Panc1 (cell line): ENCODE measurements at regions of chr15 and their contacts with region 1.

Region 1: GRCh38 chr15:96330450-96331145 is at the start of gene NR2F2:
- DNase-seq: no peak
- ATAC-seq: peak; percentile 71
- H3K4me3 ChIP-seq: peak within 1 kb of the TSS; percentile 63 to 97
- H3K27ac ChIP-seq: peak within 1 kb of the TSS; percentile 99
- H3K4me1 ChIP-seq: peaks cover 37% of the 10 kb centered on the region
- H3K27me3 ChIP-seq: no peaks in the 10 kb centered on the region
- CTCF ChIP-seq: no peak
- total RNA-seq, gene NR2F2: 53.7 TPM

Region 2: DNA sequence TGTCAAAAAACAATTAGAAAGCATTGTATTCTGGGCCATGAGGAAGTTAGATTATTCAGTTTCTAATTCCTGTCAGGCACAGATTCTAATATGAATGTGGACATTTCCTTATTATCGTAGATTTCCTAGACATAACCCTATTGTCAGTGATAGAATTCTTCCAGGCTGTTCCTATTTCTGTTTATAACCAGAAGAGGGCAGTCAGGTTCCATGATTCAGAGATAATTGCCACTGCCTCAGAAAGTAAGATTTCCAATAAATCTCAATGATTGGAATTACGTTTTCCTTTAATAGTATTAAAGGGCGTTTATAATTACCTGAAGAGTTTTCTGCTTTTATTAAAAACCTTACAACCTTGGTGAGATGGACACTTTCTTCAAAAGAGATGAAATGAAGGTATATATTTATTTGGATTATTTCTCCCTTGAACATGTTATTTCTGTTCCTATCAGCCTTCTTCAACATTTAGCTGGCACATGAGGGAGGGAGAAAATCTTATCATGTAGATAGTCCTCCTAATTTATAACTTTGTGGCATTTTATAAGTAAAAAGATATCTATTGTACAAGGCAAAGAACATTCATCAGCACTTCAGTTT is 1660.1 kb before region 1 on chr15:
- CTCF ChIA-PET with region 1: interaction called, 3 read pairs
- POLR2A ChIA-PET with region 1: no interaction called
- in situ Hi-C with region 1: no loop called
- intact Hi-C with region 1: loop called (anchors 10 kb)
- DNase-seq: peak; percentile 7
- ATAC-seq: no peak
- H3K4me3 ChIP-seq: no peak overlapping the region
- H3K27ac ChIP-seq: no peak overlapping the region
- H3K4me1 ChIP-seq: 0 out of 2 replicates have a peak, but pooled peaks cover 5% of the 10 kb centered on the region
- H3K27me3 ChIP-seq: no peaks in the 10 kb centered on the region
- CTCF ChIP-seq: peak; percentile 73; the same call in 1 of the 2 replicates

Region 3: DNA sequence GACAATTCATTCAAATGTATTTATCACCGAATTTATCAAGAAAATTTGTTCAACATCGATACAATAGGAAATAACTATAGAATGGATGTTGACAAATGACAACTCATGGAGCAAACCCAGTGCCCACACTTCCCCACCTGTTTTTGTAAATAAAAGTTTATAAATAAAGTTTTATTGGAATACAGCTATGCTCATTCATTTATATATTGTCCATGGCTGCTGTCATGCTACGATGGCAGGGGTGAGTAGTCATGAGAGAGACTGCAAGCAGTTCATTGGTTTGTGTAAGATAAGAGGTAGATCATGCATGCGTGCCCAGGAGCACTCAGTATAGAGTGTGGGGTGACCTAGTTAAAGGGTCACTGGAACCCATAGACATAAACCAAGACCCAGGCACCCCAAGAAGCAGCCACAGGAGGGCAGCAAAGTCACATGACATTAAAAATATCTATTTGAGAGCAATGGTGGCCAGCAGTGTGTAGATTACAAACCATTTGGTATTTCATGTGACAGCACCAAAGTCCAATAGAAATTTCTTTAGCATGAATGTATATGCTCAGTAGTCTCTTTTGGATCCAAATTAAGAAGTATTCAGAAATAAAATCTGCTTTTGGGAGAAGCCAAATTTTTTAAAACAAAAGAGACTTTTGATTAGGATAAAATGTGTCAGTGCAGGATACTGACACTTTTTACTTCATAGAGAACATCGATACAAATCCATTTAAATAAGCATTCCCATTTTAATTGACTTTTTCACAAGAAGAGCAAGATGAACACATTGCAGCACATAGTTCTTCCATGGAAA is 1304.5 kb before region 1 on chr15:
- CTCF ChIA-PET with region 1: no interaction called
- POLR2A ChIA-PET with region 1: no interaction called
- in situ Hi-C with region 1: no loop called
- intact Hi-C with region 1: loop called (anchors 10 kb)
- DNase-seq: no peak
- ATAC-seq: peak; percentile 83
- H3K4me3 ChIP-seq: no peak overlapping the region
- H3K27ac ChIP-seq: no peak overlapping the region
- H3K4me1 ChIP-seq: no peaks in the 10 kb centered on the region
- H3K27me3 ChIP-seq: no peaks in the 10 kb centered on the region
- CTCF ChIP-seq: peak; percentile 78

Region 4: GRCh38 chr15:95259513-95259912 is 1071.1 kb before region 1 on chr15:
- CTCF ChIA-PET with region 1: no interaction called
- POLR2A ChIA-PET with region 1: no interaction called
- in situ Hi-C with region 1: no loop called
- intact Hi-C with region 1: loop called (anchors 5 kb)
- DNase-seq: peak; percentile 50
- ATAC-seq: peak; percentile 96
- H3K4me3 ChIP-seq: no peak overlapping the region
- H3K27ac ChIP-seq: peak overlapping the region; percentile 51; the same call in 1 of the 2 replicates
- H3K4me1 ChIP-seq: peaks cover 13% of the 10 kb centered on the region
- H3K27me3 ChIP-seq: no peaks in the 10 kb centered on the region
- CTCF ChIP-seq: peak; percentile 85

Region 5: GRCh38 chr15:96053031-96053780 is 277.4 kb before region 1 on chr15:
- CTCF ChIA-PET with region 1: no interaction called
- POLR2A ChIA-PET with region 1: interaction called, 3 read pairs
- in situ Hi-C with region 1: no loop called
- intact Hi-C with region 1: loop called (anchors 10 kb)
- DNase-seq: no peak
- ATAC-seq: peak; percentile 87
- H3K4me3 ChIP-seq: peak overlapping the region; percentile 30 to 59
- H3K27ac ChIP-seq: peak overlapping the region; percentile 71
- H3K4me1 ChIP-seq: peaks cover 21% of the 10 kb centered on the region
- H3K27me3 ChIP-seq: no peaks in the 10 kb centered on the region
- CTCF ChIP-seq: no peak

Region 6: DNA sequence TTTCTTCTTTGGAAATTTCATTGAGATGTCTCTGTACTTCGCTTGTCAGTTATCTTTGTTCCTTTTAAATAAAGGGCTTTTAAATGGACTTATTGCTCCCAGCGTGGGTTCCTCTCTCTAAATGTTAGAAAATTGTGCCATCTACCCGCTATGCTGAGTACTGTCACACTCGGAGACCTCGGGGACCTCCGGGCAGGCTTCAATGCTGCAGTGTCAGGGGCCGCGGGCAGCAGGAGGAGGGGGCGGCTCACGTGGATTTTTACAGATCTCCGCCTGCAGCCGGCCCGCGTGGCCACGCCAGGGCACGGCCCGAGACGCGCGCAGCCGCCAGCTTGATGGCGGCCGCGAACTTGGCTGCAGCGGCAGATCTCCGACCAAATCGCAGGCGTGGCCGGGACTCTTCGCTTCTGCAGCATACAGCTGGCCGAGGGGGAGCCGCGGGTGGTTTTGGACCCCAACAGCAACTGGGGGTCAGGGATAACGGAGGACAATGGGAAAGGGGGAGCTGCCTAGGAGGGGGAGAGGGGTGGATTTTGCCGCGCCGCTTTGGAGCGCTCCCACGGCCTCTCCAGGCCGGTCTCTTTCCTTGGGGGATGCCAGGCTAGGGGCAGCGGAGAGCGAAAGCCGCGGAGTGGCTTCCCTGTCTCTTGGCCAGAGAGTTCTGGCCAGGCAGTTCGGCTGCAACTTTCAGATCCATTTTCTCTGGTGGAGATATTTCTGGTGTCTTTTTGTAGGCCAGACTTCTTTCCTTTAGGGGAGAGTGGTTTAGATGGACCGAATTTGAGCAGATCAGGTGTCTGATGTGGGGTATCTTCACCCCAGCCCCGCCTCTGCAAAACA is 15.2 kb after region 1 on chr15:
- CTCF ChIA-PET with region 1: interaction called, 15 read pairs
- POLR2A ChIA-PET with region 1: interaction called, 5 read pairs
- in situ Hi-C with region 1: no loop called
- intact Hi-C with region 1: no loop called
- DNase-seq: no peak
- ATAC-seq: peak; percentile 86
- H3K4me3 ChIP-seq: peak overlapping the region; percentile 46 to 55
- H3K27ac ChIP-seq: peak overlapping the region; percentile 90
- H3K4me1 ChIP-seq: peaks cover 67% of the 10 kb centered on the region
- H3K27me3 ChIP-seq: no peaks in the 10 kb centered on the region
- CTCF ChIP-seq: peak; percentile 79

Region 7: DNA sequence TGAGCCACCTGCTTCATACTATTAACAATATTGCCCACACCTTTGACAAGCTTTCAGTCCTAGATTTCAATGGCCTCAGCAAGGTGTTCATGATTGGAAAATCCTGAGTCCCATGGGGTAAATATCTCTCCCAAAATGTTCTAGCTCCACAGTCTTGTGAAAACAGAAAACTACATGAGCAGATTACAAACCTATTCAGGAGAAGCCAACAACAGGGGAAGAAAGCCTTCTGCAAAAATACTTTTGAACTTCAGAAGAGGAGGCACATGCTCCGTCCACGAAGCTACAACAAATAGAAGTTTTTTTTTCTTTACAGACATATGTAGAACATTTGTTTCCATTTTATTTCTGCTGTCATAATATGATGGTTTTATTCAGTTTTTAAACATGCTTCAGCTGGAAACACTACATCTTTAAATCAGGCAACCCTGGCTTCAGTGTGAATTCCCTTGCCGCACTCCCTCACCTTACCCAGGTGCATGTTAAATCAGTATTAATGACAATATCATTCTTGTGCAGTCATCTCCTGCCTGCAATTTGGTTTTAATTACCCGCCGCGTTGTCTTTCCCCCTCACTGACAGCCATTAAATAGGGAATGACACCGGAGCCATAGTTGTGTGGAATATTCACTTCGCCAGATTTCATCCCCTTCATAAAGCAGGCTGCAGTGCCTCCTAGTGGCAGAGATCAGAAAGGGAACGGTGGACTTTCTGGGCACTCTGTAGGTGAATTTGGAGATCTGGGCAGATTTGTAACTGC is 904.4 kb after region 1 on chr15:
- CTCF ChIA-PET with region 1: interaction called, 14 read pairs
- POLR2A ChIA-PET with region 1: no interaction called
- in situ Hi-C with region 1: no loop called
- intact Hi-C with region 1: no loop called
- DNase-seq: peak; percentile 38
- ATAC-seq: peak; percentile 92
- H3K4me3 ChIP-seq: peak overlapping the region in 1 of 2 experiments; percentile 18; a peak in 1 of 4 replicates
- H3K27ac ChIP-seq: no peak overlapping the region
- H3K4me1 ChIP-seq: peaks cover 6% of the 10 kb centered on the region; the same call in 1 of the 2 replicates
- H3K27me3 ChIP-seq: no peaks in the 10 kb centered on the region
- CTCF ChIP-seq: peak; percentile 92